RWPE1 (cell line): ENCODE measurements at regions of chr10 and their contacts with region 1.

Region 1: GRCh38 chr10:112741830-112742411 is 208.1 kb upstream of the TCF7L2 start:
- DNase-seq: peak; percentile 79
- H3K27ac ChIP-seq: no peak overlapping the region
- CTCF ChIP-seq: no peak

Region 2: GRCh38 chr10:112634096-112634830 is 107.7 kb before region 1 on chr10:
- CTCF ChIA-PET with region 1: no interaction called
- POLR2A ChIA-PET with region 1: no interaction called
- DNase-seq: peak; percentile 18
- H3K27ac ChIP-seq: no peak overlapping the region
- CTCF ChIP-seq: no peak

Region 3: DNA sequence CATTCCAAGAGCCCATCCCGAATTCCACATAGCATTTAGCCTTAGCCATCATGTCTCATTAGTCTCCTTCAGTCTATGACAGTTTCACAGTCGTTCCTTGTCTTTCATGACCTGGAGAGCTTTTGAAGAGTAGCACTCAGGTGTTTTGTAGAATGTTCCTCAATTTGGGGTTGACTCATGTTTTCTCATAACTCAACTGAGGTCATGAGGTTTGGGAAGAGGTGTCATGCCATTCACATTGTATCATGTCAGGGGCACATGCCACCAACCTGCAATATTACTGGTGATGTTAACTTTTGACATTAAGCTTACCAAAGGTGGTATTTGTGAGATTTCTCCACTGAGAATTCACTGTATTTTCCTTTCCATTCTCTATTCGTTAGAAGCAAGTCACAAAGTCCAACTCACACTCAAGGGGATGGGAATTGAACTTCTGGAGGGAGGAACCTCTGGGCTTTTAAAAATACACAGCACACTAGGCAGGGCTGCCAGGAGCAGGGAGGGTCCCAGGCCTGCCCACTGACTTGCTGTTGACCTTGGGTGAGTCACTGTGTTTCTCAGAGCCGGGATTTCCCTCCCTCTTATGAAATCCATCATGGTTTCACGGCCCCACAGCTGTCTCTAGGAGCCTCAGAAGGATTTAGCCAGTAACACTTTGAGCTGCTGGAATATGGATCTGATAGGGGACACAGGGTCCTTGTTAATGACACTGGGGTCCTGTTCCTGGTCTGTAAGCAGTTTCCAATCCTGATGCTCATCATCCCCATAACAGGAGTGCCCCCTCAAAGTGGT is 133.8 kb after region 1 on chr10:
- CTCF ChIA-PET with region 1: no interaction called
- POLR2A ChIA-PET with region 1: no interaction called
- DNase-seq: peak; percentile 69
- H3K27ac ChIP-seq: no peak overlapping the region
- CTCF ChIP-seq: no peak

Region 4: DNA sequence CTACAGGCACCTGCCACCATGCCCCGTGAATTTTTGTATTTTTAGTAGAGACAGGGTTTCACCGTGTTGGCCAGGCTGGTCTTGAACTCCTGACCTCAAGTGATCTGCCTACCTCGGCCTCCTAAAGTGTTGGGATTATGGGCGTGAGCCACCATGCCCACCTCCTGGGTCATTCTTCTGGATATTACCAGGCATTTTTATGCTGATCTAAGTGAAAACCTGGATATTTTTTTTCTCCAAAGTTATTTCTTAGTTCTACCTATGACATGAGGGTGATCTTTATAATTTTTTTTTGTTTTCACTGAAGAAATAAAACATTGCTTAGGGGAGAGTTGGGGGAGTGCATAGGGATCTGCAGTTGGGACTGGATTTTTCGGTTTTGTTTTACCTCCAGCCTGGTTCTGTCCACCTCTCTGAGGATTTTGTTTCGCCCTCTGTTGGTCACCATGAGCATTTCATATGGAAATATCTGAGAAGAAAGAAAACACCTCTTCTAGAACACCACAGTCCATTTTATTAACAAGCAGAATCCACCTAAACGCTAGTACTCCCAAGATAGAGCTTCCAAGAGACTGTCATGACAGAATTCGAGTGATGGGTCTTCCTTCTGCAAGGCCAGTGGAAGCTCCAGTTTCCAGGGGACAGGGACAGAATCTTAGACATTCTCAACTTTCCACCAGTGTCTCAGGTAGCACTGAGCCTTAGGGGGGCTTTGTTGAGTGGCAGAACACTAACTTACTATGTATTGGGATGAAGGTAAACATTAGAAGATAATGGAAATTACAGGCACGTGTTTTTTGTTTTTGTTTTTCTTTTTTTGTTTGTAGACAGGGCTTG is 1695.8 kb after region 1 on chr10:
- CTCF ChIA-PET with region 1: interaction called, 10 read pairs
- POLR2A ChIA-PET with region 1: no interaction called
- DNase-seq: peak; percentile 53
- H3K27ac ChIP-seq: no peak overlapping the region
- CTCF ChIP-seq: peak; percentile 31